A673 (cell line): ENCODE measurements at regions of chr11 and their contacts with region 1.

Region 1: GRCh38 chr11:110376711-110377324 is 52.9 kb upstream of the FDX1 start:
- DNase-seq: peak; percentile 100
- H3K4me3 ChIP-seq: peak overlapping the region; percentile 11
- H3K27ac ChIP-seq: peak overlapping the region; percentile 83
- H3K4me1 ChIP-seq: peaks cover 59% of the 10 kb centered on the region
- H3K27me3 ChIP-seq: no peaks in the 10 kb centered on the region
- CTCF ChIP-seq: peak; percentile 98

Region 2: GRCh38 chr11:109853156-109853776 is 523.6 kb before region 1 on chr11:
- CTCF ChIA-PET with region 1: no interaction called
- POLR2A ChIA-PET with region 1: no interaction called
- intact Hi-C with region 1: loop called (anchors 5 kb)
- DNase-seq: peak; percentile 89
- H3K4me3 ChIP-seq: no peak overlapping the region
- H3K27ac ChIP-seq: no peak overlapping the region
- H3K4me1 ChIP-seq: peaks cover 31% of the 10 kb centered on the region
- H3K27me3 ChIP-seq: no peaks in the 10 kb centered on the region
- CTCF ChIP-seq: peak; percentile 89

Region 3: DNA sequence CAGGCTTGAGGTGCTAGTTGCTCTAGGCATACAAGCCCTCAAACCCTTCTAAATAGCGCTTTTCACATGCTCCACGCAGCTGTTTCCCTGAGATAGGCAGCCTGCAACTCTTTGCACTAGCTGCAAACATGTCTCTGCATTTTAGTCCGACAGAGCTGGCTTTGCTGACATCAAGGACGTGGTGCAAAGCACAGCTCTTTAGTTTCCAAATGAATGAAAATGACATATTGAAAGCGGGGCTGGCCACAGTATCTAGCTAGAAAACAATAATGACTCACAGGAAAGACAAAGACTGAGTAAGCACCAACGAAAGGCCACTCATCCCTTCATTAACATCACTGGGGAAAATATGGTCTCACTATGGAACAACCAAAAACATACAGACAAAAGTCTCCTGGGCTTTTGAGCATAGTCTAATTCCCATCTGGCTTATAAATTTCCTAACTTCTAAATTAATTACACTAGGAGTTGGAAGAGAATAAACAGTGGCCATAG is 298.9 kb before region 1 on chr11:
- CTCF ChIA-PET with region 1: no interaction called
- POLR2A ChIA-PET with region 1: no interaction called
- intact Hi-C with region 1: loop called (anchors 10 kb)
- DNase-seq: peak; percentile 56
- H3K4me3 ChIP-seq: no peak overlapping the region
- H3K27ac ChIP-seq: peak overlapping the region; percentile 15
- H3K4me1 ChIP-seq: peaks cover 40% of the 10 kb centered on the region
- H3K27me3 ChIP-seq: no peaks in the 10 kb centered on the region
- CTCF ChIP-seq: no peak

Region 4: GRCh38 chr11:110128161-110128560 is 248.7 kb before region 1 on chr11:
- CTCF ChIA-PET with region 1: no interaction called
- POLR2A ChIA-PET with region 1: no interaction called
- intact Hi-C with region 1: loop called (anchors 5 kb)
- DNase-seq: peak; percentile 98
- H3K4me3 ChIP-seq: peak overlapping the region; percentile 7
- H3K27ac ChIP-seq: peak overlapping the region; percentile 70
- H3K4me1 ChIP-seq: peaks cover 78% of the 10 kb centered on the region
- H3K27me3 ChIP-seq: no peaks in the 10 kb centered on the region
- CTCF ChIP-seq: no peak

Region 5: GRCh38 chr11:110200241-110200640 is 176.6 kb before region 1 on chr11:
- CTCF ChIA-PET with region 1: interaction called, 7 read pairs
- POLR2A ChIA-PET with region 1: no interaction called
- intact Hi-C with region 1: loop called (anchors 1 kb)
- DNase-seq: no peak
- H3K4me3 ChIP-seq: no peak overlapping the region
- H3K27ac ChIP-seq: peak overlapping the region; percentile 16
- H3K4me1 ChIP-seq: peaks cover 38% of the 10 kb centered on the region
- H3K27me3 ChIP-seq: no peaks in the 10 kb centered on the region
- CTCF ChIP-seq: no peak

Region 6: GRCh38 chr11:110407315-110407714 is 30.5 kb after region 1 on chr11:
- CTCF ChIA-PET with region 1: no interaction called
- POLR2A ChIA-PET with region 1: no interaction called
- intact Hi-C with region 1: no loop called
- DNase-seq: no peak
- H3K4me3 ChIP-seq: no peak overlapping the region
- H3K27ac ChIP-seq: no peak overlapping the region
- H3K4me1 ChIP-seq: no peaks in the 10 kb centered on the region
- H3K27me3 ChIP-seq: no peaks in the 10 kb centered on the region
- CTCF ChIP-seq: no peak

Region 7: GRCh38 chr11:110525883-110526282 is 149.1 kb after region 1 on chr11:
- CTCF ChIA-PET with region 1: no interaction called
- POLR2A ChIA-PET with region 1: no interaction called
- intact Hi-C with region 1: no loop called
- DNase-seq: peak; percentile 62
- H3K4me3 ChIP-seq: no peak overlapping the region
- H3K27ac ChIP-seq: no peak overlapping the region
- H3K4me1 ChIP-seq: peaks cover 16% of the 10 kb centered on the region
- H3K27me3 ChIP-seq: no peaks in the 10 kb centered on the region
- CTCF ChIP-seq: no peak